ENCODE measurements at regions of chr14 and their contacts with region 1.

Region 1: DNA sequence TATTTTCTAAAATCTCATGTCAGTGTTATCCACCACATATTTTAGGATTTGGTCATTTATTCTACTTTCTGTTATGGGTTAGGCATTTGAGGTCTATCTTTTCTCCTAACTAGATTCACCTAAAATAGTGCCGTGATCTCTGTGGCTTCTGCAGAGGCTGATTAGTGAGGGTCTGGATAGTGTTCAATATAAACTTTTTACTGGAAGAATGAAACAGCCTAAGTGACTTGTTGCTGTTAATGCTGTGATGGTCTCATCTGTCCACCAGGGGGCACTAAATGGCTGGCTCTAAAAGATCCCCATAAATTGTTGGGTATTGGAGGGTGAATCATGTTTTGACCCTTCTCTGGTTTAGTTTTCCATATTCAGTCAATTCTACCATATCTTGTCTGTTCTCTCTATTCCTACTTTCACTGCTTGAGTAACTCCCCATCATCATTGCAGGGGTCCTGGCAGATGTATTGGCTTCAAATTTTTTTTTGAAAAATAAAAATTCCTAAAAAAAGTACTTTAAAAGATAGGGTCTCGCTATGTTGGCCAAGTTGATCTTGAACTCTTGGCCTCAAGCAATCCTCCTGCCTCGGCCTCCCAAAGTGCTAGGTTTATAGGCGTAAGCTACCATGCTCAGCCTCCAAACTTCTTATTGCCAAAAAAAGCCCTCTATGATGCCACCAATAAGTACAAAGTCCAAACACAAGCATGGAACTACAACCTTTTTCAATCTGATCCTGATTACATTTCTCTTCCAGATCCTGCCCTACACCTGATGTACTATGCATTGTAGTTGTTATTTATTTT is 6.9 kb downstream of the PABPN1 start:
- DNase-seq: peak; percentile 89
- ATAC-seq: peak; percentile 75
- H3K4me3 ChIP-seq: no peak overlapping the region
- H3K27ac ChIP-seq: no peak overlapping the region
- H3K4me1 ChIP-seq: peaks cover 22% of the 10 kb centered on the region
- H3K27me3 ChIP-seq: peaks cover 0 to 20% of the 10 kb centered on the region in 2 experiments; a peak in 2 of 5 replicates
- CTCF ChIP-seq: peak; percentile 95
- EP300 ChIP-seq: no peak
- POLR2A ChIP-seq: no peak; a peak in 1 of 4 replicates
- RAD21 ChIP-seq: peak; percentile 90

Region 2: GRCh38 chr14:23360496-23360895 is 32.4 kb after region 1 on chr14:
- CTCF ChIA-PET with region 1: interaction called, 8 read pairs
- POLR2A ChIA-PET with region 1: interaction called, 3 read pairs
- in situ Hi-C with region 1: no loop called
- intact Hi-C with region 1: loop called (anchors 2 kb)
- DNase-seq: peak; percentile 54
- ATAC-seq: peak; percentile 70
- H3K4me3 ChIP-seq: no peak overlapping the region
- H3K27ac ChIP-seq: no peak overlapping the region
- H3K4me1 ChIP-seq: peaks cover 30% of the 10 kb centered on the region
- H3K27me3 ChIP-seq: peaks cover 50 to 93% of the 10 kb centered on the region in 2 experiments
- CTCF ChIP-seq: peak; percentile 77
- EP300 ChIP-seq: no peak
- POLR2A ChIP-seq: no peak
- RAD21 ChIP-seq: peak; percentile 25; the same call in 1 of the 2 replicates

Region 3: GRCh38 chr14:23379366-23380196 is 51.4 kb after region 1 on chr14:
- CTCF ChIA-PET with region 1: interaction called, 111 read pairs
- POLR2A ChIA-PET with region 1: interaction called, 16 read pairs
- in situ Hi-C with region 1: loop called (anchors 5 kb)
- intact Hi-C with region 1: loop called (anchors 1 kb)
- DNase-seq: peak; percentile 66
- ATAC-seq: peak; percentile 88
- H3K4me3 ChIP-seq: no peak overlapping the region
- H3K27ac ChIP-seq: no peak overlapping the region
- H3K4me1 ChIP-seq: no peaks in the 10 kb centered on the region
- H3K27me3 ChIP-seq: peaks cover 26 to 90% of the 10 kb centered on the region in 2 experiments
- CTCF ChIP-seq: peak; percentile 100
- EP300 ChIP-seq: no peak
- POLR2A ChIP-seq: no peak
- RAD21 ChIP-seq: peak; percentile 98

Region 4: GRCh38 chr14:23436327-23437132 is 108.4 kb after region 1 on chr14:
- CTCF ChIA-PET with region 1: no interaction called
- POLR2A ChIA-PET with region 1: no interaction called
- in situ Hi-C with region 1: no loop called
- intact Hi-C with region 1: no loop called
- DNase-seq: no peak
- ATAC-seq: peak; percentile 0; the same call in 2 of the 3 replicates
- H3K4me3 ChIP-seq: peak overlapping the region in 1 of 3 experiments; percentile 60; a peak in 2 of 6 replicates
- H3K27ac ChIP-seq: peak overlapping the region; percentile 22
- H3K4me1 ChIP-seq: peaks cover 43% of the 10 kb centered on the region
- H3K27me3 ChIP-seq: peaks cover 20 to 70% of the 10 kb centered on the region in 2 experiments
- CTCF ChIP-seq: no peak
- EP300 ChIP-seq: no peak
- POLR2A ChIP-seq: no peak
- RAD21 ChIP-seq: no peak

Region 5: GRCh38 chr14:23457587-23458445 is 129.7 kb after region 1 on chr14:
- CTCF ChIA-PET with region 1: no interaction called
- POLR2A ChIA-PET with region 1: no interaction called
- in situ Hi-C with region 1: no loop called
- intact Hi-C with region 1: loop called (anchors 5 kb)
- DNase-seq: peak; percentile 96
- ATAC-seq: peak; percentile 97
- H3K4me3 ChIP-seq: no peak overlapping the region
- H3K27ac ChIP-seq: no peak overlapping the region
- H3K4me1 ChIP-seq: peaks cover 32% of the 10 kb centered on the region
- H3K27me3 ChIP-seq: no peaks in the 10 kb centered on the region
- CTCF ChIP-seq: no peak
- EP300 ChIP-seq: peak in 1 of 2 experiments; percentile 51; a peak in 1 of 4 replicates
- POLR2A ChIP-seq: no peak
- RAD21 ChIP-seq: no peak

Measured in HepG2 (cell line).